CD8-positive, alpha-beta memory T cell (primary cell): ENCODE measurements at regions of chr19 and their contacts with region 1.

Region 1: DNA sequence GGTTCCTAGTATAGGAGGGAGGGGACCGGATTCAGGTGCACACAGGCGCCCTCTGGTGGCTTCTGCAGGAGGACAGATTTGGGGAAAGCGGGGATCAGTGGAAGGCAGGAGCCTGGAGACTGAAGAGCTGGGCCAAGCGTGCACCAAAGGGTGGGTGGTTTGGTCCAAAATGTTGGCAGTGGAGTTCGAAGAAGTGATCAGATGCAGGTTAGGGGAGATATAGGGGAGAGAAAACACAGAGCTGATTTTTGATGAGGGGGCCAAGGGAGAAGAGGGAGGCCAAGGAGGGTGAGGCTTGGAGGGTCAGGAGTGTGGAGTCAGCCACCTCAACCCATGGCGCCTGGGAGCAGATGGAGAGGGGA is 6.8 kb upstream of the CARM1 start:
- DNase-seq: peak; percentile 68 to 83 (median 73)
- H3K4me3 ChIP-seq: no peak overlapping the region
- H3K4me3 Mint-ChIP-seq: peak overlapping the region in 3 of 7 donors; percentile 14 to 78 (median 61)
- H3K27ac ChIP-seq: no peak overlapping the region
- H3K27ac Mint-ChIP-seq: peak overlapping the region in 4 of 8 donors; percentile 44 to 86 (median 77)
- H3K4me1 ChIP-seq: peaks cover 10% of the 10 kb centered on the region
- H3K4me1 Mint-ChIP-seq: peaks cover 8 to 21% (median 11%) of the 10 kb centered on the region in 3 donors
- H3K27me3 ChIP-seq: no peaks in the 10 kb centered on the region
- H3K27me3 Mint-ChIP-seq: no peaks in the 10 kb centered on the region

Region 2: GRCh38 chr19:10701955-10702525 is 162.5 kb before region 1 on chr19:
- CTCF ChIA-PET with region 1: interaction called, 17 read pairs
- POLR2A ChIA-PET with region 1: interaction called, 4 read pairs
- DNase-seq: peak in 1 of 5 donors; percentile 53
- H3K4me3 ChIP-seq: peak overlapping the region; percentile 93
- H3K4me3 Mint-ChIP-seq: peak overlapping the region; percentile 84 to 97 (median 94)
- H3K27ac ChIP-seq: peak overlapping the region; percentile 51
- H3K27ac Mint-ChIP-seq: peak overlapping the region; percentile 24 to 81 (median 62)
- H3K4me1 ChIP-seq: peaks cover 10% of the 10 kb centered on the region
- H3K4me1 Mint-ChIP-seq: peaks cover 12 to 14% (median 13%) of the 10 kb centered on the region in 3 donors
- H3K27me3 ChIP-seq: no peaks in the 10 kb centered on the region
- H3K27me3 Mint-ChIP-seq: peaks cover 2 to 7% of the 10 kb centered on the region in 2 donors

Region 3: GRCh38 chr19:10730923-10731322 is 133.6 kb before region 1 on chr19:
- CTCF ChIA-PET with region 1: interaction called, 13 read pairs
- POLR2A ChIA-PET with region 1: no interaction called
- DNase-seq: peak in 1 of 5 donors; percentile 8
- H3K4me3 ChIP-seq: peak overlapping the region; percentile 8
- H3K4me3 Mint-ChIP-seq: peak overlapping the region in 4 of 7 donors; percentile 11 to 90 (median 76)
- H3K27ac ChIP-seq: peak overlapping the region; percentile 59
- H3K27ac Mint-ChIP-seq: peak overlapping the region; percentile 91 to 99 (median 98)
- H3K4me1 ChIP-seq: peaks cover 33% of the 10 kb centered on the region
- H3K4me1 Mint-ChIP-seq: peaks cover 49 to 66% (median 54%) of the 10 kb centered on the region in 3 donors
- H3K27me3 ChIP-seq: no peaks in the 10 kb centered on the region
- H3K27me3 Mint-ChIP-seq: no peaks in the 10 kb centered on the region

Region 4: DNA sequence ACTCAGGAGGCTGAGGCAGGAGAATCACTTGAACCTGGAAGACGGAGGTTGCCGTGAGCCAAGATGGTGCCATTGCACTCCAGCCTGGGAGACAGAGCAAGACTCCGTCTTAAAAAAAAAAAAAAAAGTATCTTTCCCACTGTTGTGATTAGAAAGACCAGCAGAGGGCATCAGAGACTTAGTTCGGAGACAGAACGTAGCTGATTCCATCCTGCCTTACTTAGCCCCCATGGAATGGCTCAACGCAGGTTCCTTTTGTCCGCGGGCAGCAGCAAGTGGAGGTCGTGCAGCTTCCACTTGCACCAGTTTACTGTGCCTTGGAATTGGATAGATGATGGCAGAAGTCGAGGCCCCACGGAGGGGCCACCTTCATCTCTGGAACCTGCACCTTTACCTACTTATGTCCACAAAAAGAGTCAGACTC is 72.2 kb after region 1 on chr19:
- CTCF ChIA-PET with region 1: no interaction called
- POLR2A ChIA-PET with region 1: no interaction called
- DNase-seq: peak in 2 of 5 donors; percentile 53 to 63
- H3K4me3 ChIP-seq: no peak overlapping the region
- H3K4me3 Mint-ChIP-seq: peak overlapping the region in 2 of 7 donors; percentile 48 to 65
- H3K27ac ChIP-seq: no peak overlapping the region
- H3K27ac Mint-ChIP-seq: peak overlapping the region in 3 of 8 donors; percentile 10 to 39 (median 38)
- H3K4me1 ChIP-seq: no peaks in the 10 kb centered on the region
- H3K4me1 Mint-ChIP-seq: peaks cover 4 to 8% (median 8%) of the 10 kb centered on the region in 3 donors
- H3K27me3 ChIP-seq: no peaks in the 10 kb centered on the region
- H3K27me3 Mint-ChIP-seq: no peaks in the 10 kb centered on the region